Activated T-helper 2 cell treated with anti-CD3 and anti-CD28 coated beads, Interferon-gamma antibody, Interleukin-2, Interleukin-4, amounts not matched to agents 10 μg/mL and 5 μg/mL and 100 μg/mL, durations not matched to agents 14 hours and 24 hours and 36 hours (primary cell): ENCODE measurements at regions of chr5 and their contacts with region 1.

Region 1: GRCh38 chr5:61658592-61659008 is 326.5 kb downstream of the ZSWIM6 start:
- DNase-seq: peak; percentile 56
- H3K4me3 Mint-ChIP-seq: no peak overlapping the region
- H3K27ac Mint-ChIP-seq: no peak overlapping the region
- H3K4me1 Mint-ChIP-seq: peaks cover 2% of the 10 kb centered on the region
- H3K27me3 Mint-ChIP-seq: peaks cover 14% of the 10 kb centered on the region

Region 2: GRCh38 chr5:60959156-60959555 is 699.4 kb before region 1 on chr5:
- intact Hi-C with region 1: loop called (anchors 10 kb)
- DNase-seq: no peak
- H3K4me3 Mint-ChIP-seq: no peak overlapping the region
- H3K27ac Mint-ChIP-seq: no peak overlapping the region
- H3K4me1 Mint-ChIP-seq: peaks cover 2% of the 10 kb centered on the region
- H3K27me3 Mint-ChIP-seq: no peaks in the 10 kb centered on the region

Region 3: DNA sequence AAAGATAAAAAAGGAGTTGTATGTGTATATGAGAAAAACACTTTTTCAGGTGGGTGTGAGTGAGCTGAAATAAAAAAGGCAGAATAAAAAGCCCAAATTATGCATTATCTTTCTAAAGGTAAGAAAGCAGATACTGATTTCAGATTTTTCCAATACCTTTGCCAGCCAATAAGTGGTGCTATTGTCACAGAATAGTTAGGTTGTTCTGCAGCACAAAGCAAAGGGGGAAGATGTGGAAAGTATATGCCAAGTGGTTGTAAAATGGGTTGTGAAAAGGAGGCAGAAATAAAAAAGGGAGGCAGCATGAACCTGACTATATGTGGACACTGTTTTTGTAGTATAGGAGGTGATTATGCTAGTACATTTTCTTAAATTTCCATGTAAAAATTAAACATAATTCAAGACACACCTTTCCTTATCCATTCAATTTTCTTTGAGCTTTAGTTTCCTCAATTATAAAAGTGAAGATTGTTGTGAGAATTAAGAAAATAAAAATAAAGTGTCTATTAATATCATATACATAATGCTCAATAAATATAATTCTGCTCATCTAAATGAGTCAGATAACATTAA is 603.1 kb before region 1 on chr5:
- intact Hi-C with region 1: loop called (anchors 1 kb)
- DNase-seq: no peak
- H3K4me3 Mint-ChIP-seq: no peak overlapping the region
- H3K27ac Mint-ChIP-seq: no peak overlapping the region
- H3K4me1 Mint-ChIP-seq: peaks cover 4% of the 10 kb centered on the region
- H3K27me3 Mint-ChIP-seq: no peaks in the 10 kb centered on the region

Region 4: DNA sequence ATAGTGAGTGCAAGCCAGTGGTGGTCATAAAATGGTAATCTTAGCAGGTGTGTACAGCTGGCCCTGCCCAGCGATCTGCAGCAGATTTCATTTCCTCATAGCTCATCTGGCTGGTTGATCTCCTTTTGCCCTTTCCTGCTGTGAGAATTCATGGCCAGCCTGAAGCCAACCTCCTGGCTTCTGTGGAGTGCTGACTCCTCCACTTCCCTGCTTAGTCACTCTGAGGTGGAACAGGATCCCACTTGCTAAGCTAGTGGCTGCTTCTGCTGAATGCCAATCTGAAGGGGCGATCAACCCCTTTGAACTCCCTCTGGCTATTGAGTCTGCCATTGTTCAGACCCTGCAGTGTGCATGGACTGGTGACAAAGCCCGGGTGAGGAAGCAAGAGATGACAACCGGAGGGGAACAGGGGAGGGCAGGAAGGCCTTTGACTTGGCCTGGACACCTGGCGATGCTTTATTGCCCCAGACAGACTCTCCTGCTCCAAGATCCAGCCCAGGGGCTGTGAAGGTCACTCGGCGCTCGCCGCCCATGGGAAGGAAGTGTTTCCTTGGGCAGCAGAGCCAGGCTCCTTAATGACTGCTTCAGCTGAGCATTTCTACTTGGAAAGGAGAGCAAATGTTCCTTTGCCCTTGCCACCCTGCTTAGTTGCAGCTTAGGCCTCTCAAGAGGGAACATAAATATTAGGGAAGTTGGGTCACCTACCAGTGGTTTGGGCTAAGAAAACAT is 14.6 kb after region 1 on chr5:
- intact Hi-C with region 1: no loop called
- DNase-seq: no peak
- H3K4me3 Mint-ChIP-seq: no peak overlapping the region
- H3K27ac Mint-ChIP-seq: no peak overlapping the region
- H3K4me1 Mint-ChIP-seq: no peaks in the 10 kb centered on the region
- H3K27me3 Mint-ChIP-seq: no peaks in the 10 kb centered on the region